ENCODE measurements at regions of chr17 and their contacts with region 1.

Region 1: DNA sequence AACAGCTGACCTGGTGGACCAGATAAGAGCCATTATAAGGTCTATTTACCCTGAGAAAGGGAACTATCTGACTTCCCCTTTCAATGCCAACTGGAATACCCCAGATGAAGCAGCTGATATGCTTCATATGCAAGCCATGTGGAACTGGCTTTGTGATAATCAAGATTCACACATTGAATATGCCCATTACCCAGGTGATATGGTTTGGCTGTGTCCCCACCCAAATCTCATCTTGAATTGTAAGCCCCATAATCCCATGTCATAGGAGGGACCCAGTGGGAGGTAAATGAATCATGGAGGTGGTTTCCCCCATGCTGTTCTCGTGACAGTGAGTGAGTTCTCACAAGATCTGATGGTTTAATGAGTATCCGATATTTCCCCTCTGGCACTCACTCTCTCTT is 42.1 kb downstream of the IKZF3 start:
- DNase-seq: peak; percentile 59
- H3K4me3 Mint-ChIP-seq: no peak overlapping the region
- H3K27ac Mint-ChIP-seq: no peak overlapping the region
- H3K4me1 Mint-ChIP-seq: peaks cover 9% of the 10 kb centered on the region
- H3K27me3 Mint-ChIP-seq: no peaks in the 10 kb centered on the region
- CTCF ChIP-seq: no peak

Region 2: DNA sequence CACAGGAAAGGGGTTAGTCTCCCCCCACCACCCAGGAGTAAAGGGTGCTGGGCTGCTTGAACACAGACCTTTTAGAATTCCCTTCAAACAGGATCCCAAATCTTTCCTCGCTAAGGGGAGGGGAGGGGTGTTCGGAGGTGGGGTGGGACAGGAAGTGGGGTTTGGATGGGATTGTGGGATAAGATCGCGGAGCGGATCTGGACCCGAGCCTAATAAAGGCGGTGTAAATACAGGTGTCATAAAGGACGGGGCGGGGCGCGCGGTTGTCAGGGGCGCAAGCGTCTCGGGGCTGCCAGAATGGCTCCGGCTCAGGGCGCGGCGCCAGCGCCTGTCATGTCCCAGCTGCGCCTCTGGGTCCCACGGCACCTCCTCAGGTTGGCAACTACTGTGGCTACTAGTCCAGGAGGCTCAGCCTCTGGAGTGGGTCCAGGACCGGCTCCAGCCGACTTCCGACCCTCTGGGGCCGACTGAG is 795.0 kb before region 1 on chr17:
- CTCF ChIA-PET with region 1: no interaction called
- intact Hi-C with region 1: no loop called
- DNase-seq: peak; percentile 83
- H3K4me3 Mint-ChIP-seq: peak overlapping the region; percentile 70
- H3K27ac Mint-ChIP-seq: no peak overlapping the region
- H3K4me1 Mint-ChIP-seq: peaks cover 7% of the 10 kb centered on the region
- H3K27me3 Mint-ChIP-seq: peaks cover 70% of the 10 kb centered on the region
- CTCF ChIP-seq: no peak

Region 3: DNA sequence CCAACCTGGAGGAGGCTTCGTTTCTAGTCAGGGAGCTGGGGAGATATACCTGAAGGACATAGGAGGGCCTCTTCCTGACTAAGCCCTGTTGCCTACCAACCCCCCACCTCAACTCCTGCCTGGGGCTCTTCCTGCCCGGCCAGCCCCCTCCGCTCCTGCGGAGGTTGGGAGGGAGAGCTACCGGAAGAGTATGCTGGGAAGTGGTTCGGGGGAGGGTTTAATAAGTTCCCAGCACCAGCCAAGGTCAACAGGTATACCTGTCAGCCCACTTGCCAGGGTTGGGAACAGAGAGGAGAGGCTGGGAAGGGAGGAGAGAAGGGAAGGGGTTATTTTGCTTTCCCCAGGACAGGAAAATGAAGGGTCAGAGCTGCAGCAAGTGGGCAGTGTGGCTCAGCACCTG is 190.6 kb before region 1 on chr17:
- CTCF ChIA-PET with region 1: interaction called, 120 read pairs
- intact Hi-C with region 1: no loop called
- DNase-seq: no peak
- H3K4me3 Mint-ChIP-seq: peak overlapping the region; percentile 0
- H3K27ac Mint-ChIP-seq: peak overlapping the region; percentile 0
- H3K4me1 Mint-ChIP-seq: peaks cover 34% of the 10 kb centered on the region
- H3K27me3 Mint-ChIP-seq: peaks cover 59% of the 10 kb centered on the region
- CTCF ChIP-seq: no peak

Region 4: DNA sequence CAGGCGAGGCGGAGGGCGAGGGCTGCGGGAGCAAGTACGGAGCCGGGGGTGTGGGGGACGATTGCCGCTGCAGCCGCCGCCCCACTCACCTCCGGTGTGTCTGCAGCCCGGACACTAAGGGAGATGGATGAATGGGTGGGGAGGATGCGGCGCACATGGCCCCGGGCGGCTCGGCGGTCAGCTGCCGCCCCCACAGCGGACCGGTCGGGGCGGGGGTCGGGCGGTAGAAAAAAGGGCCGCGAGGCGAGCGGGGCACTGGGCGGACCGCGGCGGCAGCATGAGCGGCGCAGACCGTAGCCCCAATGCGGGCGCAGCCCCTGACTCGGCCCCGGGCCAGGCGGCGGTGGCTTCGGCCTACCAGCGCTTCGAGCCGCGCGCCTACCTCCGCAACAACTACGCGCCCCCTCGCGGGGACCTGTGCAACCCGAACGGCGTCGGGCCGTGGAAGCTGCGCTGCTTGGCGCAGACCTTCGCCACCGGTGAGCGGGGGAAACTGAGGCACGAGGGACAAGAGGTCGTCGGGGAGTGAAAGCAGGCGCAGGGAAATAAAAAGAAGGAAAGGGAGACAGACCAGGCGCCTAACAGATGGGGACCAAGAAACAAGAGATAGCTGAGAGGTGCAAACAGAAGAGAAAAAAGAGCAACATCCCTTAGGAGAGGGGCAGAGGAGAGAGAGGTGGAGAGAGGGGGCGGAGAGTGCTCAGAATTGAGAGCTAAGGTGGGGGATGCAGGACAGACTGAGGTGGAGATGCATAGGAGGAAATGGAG is 153.7 kb before region 1 on chr17 and contains the start of gene PNMT:
- CTCF ChIA-PET with region 1: interaction called, 127 read pairs
- intact Hi-C with region 1: no loop called
- DNase-seq: peak; percentile 100
- H3K4me3 Mint-ChIP-seq: peak within 1 kb of the TSS; percentile 24
- H3K27ac Mint-ChIP-seq: peak within 1 kb of the TSS; percentile 0
- H3K4me1 Mint-ChIP-seq: peaks cover 65% of the 10 kb centered on the region
- H3K27me3 Mint-ChIP-seq: peaks cover 69% of the 10 kb centered on the region
- CTCF ChIP-seq: no peak
- total RNA-seq, gene PNMT: 1.3 and 3.2 TPM in 2 replicates

Region 5: GRCh38 chr17:39699818-39700147 is 122.3 kb before region 1 on chr17 and contains the start of gene ERBB2:
- CTCF ChIA-PET with region 1: interaction called, 146 read pairs
- intact Hi-C with region 1: no loop called
- DNase-seq: peak; percentile 100
- H3K4me3 Mint-ChIP-seq: peak within 1 kb of the TSS; percentile 71
- H3K27ac Mint-ChIP-seq: peak within 1 kb of the TSS; percentile 67
- H3K4me1 Mint-ChIP-seq: peaks cover 68% of the 10 kb centered on the region
- H3K27me3 Mint-ChIP-seq: no peaks in the 10 kb centered on the region
- CTCF ChIP-seq: no peak
- total RNA-seq, gene ERBB2: 4,829 and 4,830 TPM in 2 replicates

Region 6: DNA sequence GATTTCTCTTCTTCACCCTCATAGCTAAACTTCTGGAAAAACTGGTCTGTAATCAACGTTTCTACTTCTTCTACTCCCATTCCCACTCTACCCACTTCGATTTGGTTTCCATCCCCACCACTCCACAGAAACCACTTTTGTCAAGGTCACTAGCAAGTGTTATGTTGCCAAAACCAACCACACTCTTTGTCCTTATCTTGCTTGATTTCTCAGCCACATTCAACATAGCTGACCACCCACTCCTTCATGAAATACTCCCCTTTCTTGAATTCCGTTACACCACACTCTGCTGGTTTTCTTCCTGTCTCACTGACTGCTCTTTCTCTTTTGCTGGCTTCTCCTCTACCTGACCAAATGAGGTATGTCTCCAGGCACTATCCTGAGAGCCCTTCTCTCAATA is 30.2 kb after region 1 on chr17:
- CTCF ChIA-PET with region 1: interaction called, 809 read pairs
- intact Hi-C with region 1: no loop called
- DNase-seq: peak; percentile 59
- H3K4me3 Mint-ChIP-seq: no peak overlapping the region
- H3K27ac Mint-ChIP-seq: no peak overlapping the region
- H3K4me1 Mint-ChIP-seq: peaks cover 10% of the 10 kb centered on the region
- H3K27me3 Mint-ChIP-seq: no peaks in the 10 kb centered on the region
- CTCF ChIP-seq: no peak

Region 7: DNA sequence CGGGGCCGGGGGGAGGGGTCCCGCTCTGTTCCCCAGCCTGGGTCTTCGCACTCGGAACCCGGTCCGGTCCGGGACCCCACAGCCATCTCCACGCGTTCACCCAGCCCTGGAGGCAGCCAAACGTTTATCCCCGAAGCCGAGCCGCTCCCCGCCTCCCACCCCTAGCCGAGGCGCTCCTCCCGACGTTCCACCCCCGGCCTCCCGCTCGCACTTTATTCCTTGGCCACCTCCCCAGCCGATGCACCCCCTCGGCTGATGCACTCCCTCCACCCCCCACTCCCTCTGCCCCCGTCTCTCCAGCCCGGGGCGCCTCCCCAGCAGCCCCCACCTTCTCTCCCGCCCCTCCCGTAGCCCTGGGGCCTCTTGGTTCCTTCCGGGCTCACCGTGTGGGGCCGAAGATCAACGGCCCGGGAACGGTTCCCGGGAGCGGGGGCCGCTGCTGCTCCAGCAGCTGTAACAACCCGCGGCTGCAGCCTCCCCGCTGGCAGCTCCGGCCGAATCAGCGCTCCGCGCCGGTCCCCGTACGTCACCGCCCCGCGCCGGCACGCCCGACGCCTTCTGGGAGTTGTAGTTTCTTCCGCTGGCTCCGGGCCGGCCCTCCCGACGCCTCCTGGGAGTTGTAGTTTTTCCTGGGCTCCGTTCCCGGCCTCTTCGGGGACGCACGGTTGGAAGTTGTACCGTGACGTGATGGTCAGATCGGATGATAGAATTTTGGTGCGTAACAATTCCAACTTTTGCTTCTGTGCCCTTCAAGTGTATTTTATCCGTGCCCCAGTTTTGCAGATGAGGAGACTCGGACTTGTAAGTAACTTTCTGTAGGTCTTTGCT is 105.3 kb after region 1 on chr17 and contains the starts of genes LRRC3C and ORMDL3:
- CTCF ChIA-PET with region 1: interaction called, 76 read pairs
- intact Hi-C with region 1: no loop called
- DNase-seq: no peak
- H3K4me3 Mint-ChIP-seq: peak within 1 kb of the TSS; percentile 74
- H3K27ac Mint-ChIP-seq: peak within 1 kb of the TSS; percentile 66
- H3K4me1 Mint-ChIP-seq: peaks cover 60% of the 10 kb centered on the region
- H3K27me3 Mint-ChIP-seq: no peaks in the 10 kb centered on the region
- CTCF ChIP-seq: no peak
- total RNA-seq, gene LRRC3C: not detected in 2 replicates
- total RNA-seq, gene ORMDL3: 1,738 and 1,968 TPM in 2 replicates

Region 8: GRCh38 chr17:40041196-40041595 is 219.1 kb after region 1 on chr17:
- CTCF ChIA-PET with region 1: no interaction called
- intact Hi-C with region 1: no loop called
- DNase-seq: no peak
- H3K4me3 Mint-ChIP-seq: no peak overlapping the region
- H3K27ac Mint-ChIP-seq: no peak overlapping the region
- H3K4me1 Mint-ChIP-seq: peaks cover 8% of the 10 kb centered on the region
- H3K27me3 Mint-ChIP-seq: no peaks in the 10 kb centered on the region
- CTCF ChIP-seq: no peak

Measured in Calu3 (cell line).